ENCODE measurements at regions of chrX and their contacts with region 1.

Region 1: GRCh38 chrX:119516157-119516702 is 48.0 kb downstream of the SLC25A5 start:
- DNase-seq: peak; percentile 39
- ATAC-seq: peak; percentile 80
- H3K4me3 ChIP-seq: no peak overlapping the region
- H3K27ac ChIP-seq: no peak overlapping the region
- H3K4me1 ChIP-seq: peaks cover 0 to 8% of the 10 kb centered on the region in 2 experiments; a peak in 2 of 4 replicates
- H3K27me3 ChIP-seq: no peaks in the 10 kb centered on the region
- CTCF ChIP-seq: peak; percentile 77 to 92 (median 80)
- POLR2A ChIP-seq: no peak
- RAD21 ChIP-seq: peak; percentile 92

Region 2: DNA sequence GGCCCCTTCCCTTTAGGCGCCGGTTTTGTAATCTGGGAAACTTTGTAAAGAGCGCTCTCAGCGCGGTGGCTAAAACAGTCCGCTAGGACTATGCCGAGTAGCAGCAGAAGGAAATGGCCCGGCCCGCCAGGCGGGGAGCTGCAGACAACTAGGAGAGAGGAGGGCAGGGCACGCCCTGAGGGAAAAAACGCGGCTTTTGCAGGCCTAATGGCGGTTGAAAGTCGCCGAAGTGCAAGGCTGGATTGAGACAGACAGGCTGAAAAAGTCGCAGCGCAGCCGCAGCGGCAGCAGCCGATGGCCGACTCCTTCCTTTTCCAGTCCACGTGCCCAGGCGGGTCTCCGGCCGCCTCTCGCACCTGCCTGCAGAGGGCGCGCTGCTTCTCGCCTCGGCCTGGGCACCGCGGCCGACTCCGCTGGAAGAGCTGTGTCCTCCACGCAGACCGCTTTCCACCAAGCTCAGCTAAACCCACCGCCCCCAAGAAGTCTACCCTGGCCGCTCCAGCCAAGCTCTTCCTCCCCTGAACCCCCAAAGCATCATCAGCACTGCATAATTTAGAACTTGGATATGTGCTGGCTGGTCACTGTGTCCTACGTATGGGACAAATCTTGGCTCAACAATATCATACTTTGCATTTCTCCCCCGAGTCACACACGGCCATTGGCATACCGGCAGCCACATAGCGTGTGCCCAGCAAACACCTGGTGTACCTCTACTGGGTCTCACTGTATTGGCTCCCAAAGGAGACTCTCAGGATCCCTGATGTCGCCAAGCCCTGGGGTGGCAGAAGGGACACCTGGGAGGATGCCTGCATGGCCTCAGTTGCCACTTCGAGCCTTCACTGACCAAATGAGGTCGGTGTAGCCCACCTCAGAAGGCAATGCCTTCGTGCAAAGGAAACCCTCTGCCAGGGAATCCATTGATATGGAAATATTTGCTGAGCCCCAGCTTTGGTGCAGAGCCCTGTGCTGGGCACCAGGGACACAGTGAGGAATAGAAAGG is 33.4 kb before region 1 on chrX:
- CTCF ChIA-PET with region 1: interaction called, 36 read pairs
- POLR2A ChIA-PET with region 1: interaction called, 4 read pairs
- RAD21 ChIA-PET with region 1: no interaction called
- intact Hi-C with region 1: no loop called
- DNase-seq: no peak
- ATAC-seq: peak; percentile 90
- H3K4me3 ChIP-seq: peak overlapping the region; percentile 19 to 35; a peak in 2 of 4 replicates
- H3K27ac ChIP-seq: peak overlapping the region; percentile 44; the same call in 1 of the 2 replicates
- H3K4me1 ChIP-seq: peaks cover 0 to 27% of the 10 kb centered on the region in 2 experiments; a peak in 3 of 4 replicates
- H3K27me3 ChIP-seq: no peaks in the 10 kb centered on the region
- CTCF ChIP-seq: peak; percentile 55 to 67 (median 67); a peak in 5 of 6 replicates
- POLR2A ChIP-seq: no peak
- RAD21 ChIP-seq: peak; percentile 51

Region 3: GRCh38 chrX:119502727-119503483 is 13.3 kb before region 1 on chrX:
- CTCF ChIA-PET with region 1: interaction called, 15 read pairs
- POLR2A ChIA-PET with region 1: interaction called, 5 read pairs
- RAD21 ChIA-PET with region 1: interaction called, 3 to 6 read pairs
- intact Hi-C with region 1: no loop called
- DNase-seq: no peak
- ATAC-seq: peak; percentile 74
- H3K4me3 ChIP-seq: peak overlapping the region in 1 of 2 experiments; percentile 18; a peak in 1 of 4 replicates
- H3K27ac ChIP-seq: peak overlapping the region; percentile 79
- H3K4me1 ChIP-seq: peaks cover 18 to 41% of the 10 kb centered on the region in 2 experiments
- H3K27me3 ChIP-seq: no peaks in the 10 kb centered on the region
- CTCF ChIP-seq: no peak
- POLR2A ChIP-seq: no peak
- RAD21 ChIP-seq: no peak

Region 4: GRCh38 chrX:119753571-119754257 is 237.5 kb after region 1 on chrX:
- CTCF ChIA-PET with region 1: interaction called, 4 read pairs
- POLR2A ChIA-PET with region 1: no interaction called
- RAD21 ChIA-PET with region 1: interaction called in 1 of 2 experiments, 3 read pairs
- intact Hi-C with region 1: loop called (anchors 10 kb)
- DNase-seq: peak; percentile 48
- ATAC-seq: no peak
- H3K4me3 ChIP-seq: no peak overlapping the region
- H3K27ac ChIP-seq: no peak overlapping the region
- H3K4me1 ChIP-seq: peaks cover 3 to 20% of the 10 kb centered on the region in 2 experiments; a peak in 3 of 4 replicates
- H3K27me3 ChIP-seq: no peaks in the 10 kb centered on the region
- CTCF ChIP-seq: peak; percentile 45 to 53 (median 48); a peak in 5 of 6 replicates
- POLR2A ChIP-seq: no peak
- RAD21 ChIP-seq: peak; percentile 52